IMR-90 (cell line): ENCODE measurements at regions of chr12 and their contacts with region 1.

Region 1: DNA sequence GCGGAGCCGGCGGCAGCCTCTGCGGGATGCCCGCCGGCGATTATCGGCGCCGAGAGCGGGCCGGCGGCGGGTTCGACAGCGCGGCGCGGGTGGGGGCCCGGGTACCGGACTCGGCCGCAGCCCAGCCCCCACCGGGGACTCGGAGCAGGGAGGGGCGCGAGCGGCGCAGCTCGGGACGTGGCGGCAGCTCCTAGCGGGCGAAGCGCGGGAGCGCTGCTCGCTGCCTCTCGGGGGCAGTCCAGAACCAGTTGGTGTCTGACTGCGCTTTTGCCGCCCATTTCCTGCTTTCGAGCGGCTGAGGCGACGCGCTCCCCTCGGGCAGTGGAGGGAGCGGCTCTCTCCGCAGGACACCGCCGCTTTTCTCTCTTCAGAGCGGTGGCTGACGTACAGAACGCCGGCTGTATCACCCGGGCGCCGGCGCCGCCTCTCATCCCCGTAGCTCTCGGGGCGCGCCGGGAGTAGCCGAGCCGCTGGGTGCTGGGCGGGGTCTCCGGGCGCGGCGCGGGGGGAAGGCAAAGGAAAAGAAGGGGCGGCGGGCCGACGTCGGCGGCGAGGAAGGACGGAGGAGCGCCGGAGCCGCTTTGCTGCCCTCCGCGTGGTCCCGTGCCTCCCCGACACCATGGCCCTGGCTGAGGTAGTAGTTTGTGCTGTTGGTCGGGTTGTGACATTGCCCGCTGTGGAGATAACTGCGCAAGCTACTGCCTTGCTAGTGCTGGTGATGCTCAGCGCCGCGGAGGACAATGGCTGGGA is 136.6 kb downstream of the MON2 start:
- DNase-seq: peak; percentile 89
- ATAC-seq: peak; percentile 90
- H3K4me3 ChIP-seq: peak overlapping the region; percentile 97
- H3K27ac ChIP-seq: peak overlapping the region; percentile 99
- H3K4me1 ChIP-seq: no peaks in the 10 kb centered on the region; the same call in 1 of the 2 replicates
- H3K27me3 ChIP-seq: no peaks in the 10 kb centered on the region
- CTCF ChIP-seq: peak; percentile 60
- POLR2A ChIP-seq: peak; percentile 88
- RAD21 ChIP-seq: peak; percentile 56

Region 2: DNA sequence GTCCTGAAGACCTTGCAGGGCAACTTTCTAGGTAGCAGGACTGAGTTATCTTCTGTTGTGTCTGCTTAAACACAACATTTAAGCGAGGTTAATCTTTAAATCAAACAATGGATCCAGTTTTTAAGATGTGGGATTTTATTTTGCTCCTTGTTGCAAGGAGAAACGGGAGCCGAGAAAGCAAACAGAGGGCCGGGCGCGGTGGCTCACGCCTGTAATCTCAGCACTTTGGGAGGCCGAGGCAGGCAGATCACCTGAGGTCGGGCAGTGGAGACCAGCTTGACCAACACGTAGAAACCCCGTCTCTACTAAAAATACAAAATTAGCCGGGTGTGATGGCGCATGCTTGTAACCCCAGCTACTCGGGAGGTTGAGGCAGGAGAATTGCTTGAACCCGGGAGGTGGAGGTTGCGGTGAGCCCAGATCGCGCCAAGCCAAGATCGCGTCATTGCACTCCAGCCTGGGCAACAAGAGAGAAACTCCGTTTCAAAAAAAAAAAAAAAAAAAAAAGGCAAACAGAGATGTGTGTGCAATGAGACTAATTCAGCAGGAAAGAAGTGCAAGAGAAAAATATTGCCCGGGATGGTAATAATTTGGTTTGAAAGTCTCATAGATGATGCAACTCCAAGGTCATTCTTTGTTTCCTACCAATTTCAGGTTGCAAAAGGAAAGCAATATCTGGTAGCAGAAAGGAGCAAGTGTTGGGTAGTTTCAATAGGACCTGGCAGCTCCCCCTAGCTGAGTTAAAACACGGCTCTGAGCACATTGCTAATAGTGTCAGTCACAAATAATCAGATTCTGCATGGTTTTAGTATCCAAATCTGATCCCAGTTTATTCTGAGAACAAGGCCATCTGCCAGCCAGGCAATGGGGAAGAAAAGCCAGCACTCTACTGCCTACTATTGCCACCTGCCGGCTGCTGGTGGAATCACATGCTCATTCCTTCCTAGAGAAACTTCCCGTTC is 190.3 kb after region 1 on chr12:
- CTCF ChIA-PET with region 1: interaction called, 8 read pairs
- POLR2A ChIA-PET with region 1: interaction called, 4 read pairs
- dilution Hi-C with region 1: loop called (anchors 25 kb)
- in situ Hi-C with region 1: no loop called
- intact Hi-C with region 1: loop called (anchors 1 kb)
- DNase-seq: peak; percentile 87
- ATAC-seq: peak; percentile 99
- H3K4me3 ChIP-seq: no peak overlapping the region
- H3K27ac ChIP-seq: no peak overlapping the region
- H3K4me1 ChIP-seq: no peaks in the 10 kb centered on the region
- H3K27me3 ChIP-seq: no peaks in the 10 kb centered on the region
- CTCF ChIP-seq: peak; percentile 97
- POLR2A ChIP-seq: no peak; the same call in 1 of the 2 replicates
- RAD21 ChIP-seq: peak; percentile 99

Region 3: GRCh38 chr12:62862259-62862881 is 259.1 kb after region 1 on chr12:
- CTCF ChIA-PET with region 1: no interaction called
- POLR2A ChIA-PET with region 1: no interaction called
- dilution Hi-C with region 1: no loop called
- in situ Hi-C with region 1: no loop called
- intact Hi-C with region 1: loop called (anchors 5 kb)
- DNase-seq: peak; percentile 57
- ATAC-seq: peak; percentile 8
- H3K4me3 ChIP-seq: no peak overlapping the region
- H3K27ac ChIP-seq: no peak overlapping the region
- H3K4me1 ChIP-seq: peaks cover 22% of the 10 kb centered on the region
- H3K27me3 ChIP-seq: no peaks in the 10 kb centered on the region
- CTCF ChIP-seq: no peak
- POLR2A ChIP-seq: no peak
- RAD21 ChIP-seq: no peak